Endothelial cell of umbilical vein (primary cell): ENCODE measurements at regions of chr10 and their contacts with region 1.

Region 1: GRCh38 chr10:100743626-100744135 is 1.7 kb upstream of the PAX2 start:
- DNase-seq: peak; percentile 44
- H3K4me3 ChIP-seq: no peak overlapping the region
- H3K27ac ChIP-seq: no peak overlapping the region
- H3K4me1 ChIP-seq: no peaks in the 10 kb centered on the region
- H3K27me3 ChIP-seq: peaks cover 87 to 96% of the 10 kb centered on the region in 2 experiments
- CTCF ChIP-seq: peak; percentile 66 to 82
- POLR2A ChIP-seq: no peak

Region 2: DNA sequence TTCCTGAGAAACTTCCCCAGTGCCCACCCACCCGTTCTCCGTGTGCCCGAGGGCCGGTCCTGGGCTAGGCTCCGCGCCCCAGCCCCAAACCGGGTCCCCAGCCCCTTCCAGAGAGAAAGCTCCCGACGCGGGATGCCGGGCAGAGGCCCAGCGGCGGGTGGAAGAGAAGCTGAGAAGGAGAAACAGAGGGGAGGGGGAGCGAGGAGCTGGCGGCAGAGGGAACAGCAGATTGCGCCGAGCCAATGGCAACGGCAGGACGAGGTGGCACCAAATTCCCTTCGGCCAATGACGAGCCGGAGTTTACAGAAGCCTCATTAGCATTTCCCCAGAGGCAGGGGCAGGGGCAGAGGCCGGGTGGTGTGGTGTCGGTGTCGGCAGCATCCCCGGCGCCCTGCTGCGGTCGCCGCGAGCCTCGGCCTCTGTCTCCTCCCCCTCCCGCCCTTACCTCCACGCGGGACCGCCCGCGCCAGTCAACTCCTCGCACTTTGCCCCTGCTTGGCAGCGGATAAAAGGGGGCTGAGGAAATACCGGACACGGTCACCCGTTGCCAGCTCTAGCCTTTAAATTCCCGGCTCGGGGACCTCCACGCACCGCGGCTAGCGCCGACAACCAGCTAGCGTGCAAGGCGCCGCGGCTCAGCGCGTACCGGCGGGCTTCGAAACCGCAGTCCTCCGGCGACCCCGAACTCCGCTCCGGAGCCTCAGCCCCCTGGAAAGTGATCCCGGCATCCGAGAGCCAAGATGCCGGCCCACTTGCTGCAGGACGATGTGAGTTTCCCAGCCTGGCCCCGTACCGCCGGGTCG is 396.7 kb before region 1 on chr10 and contains the start of gene SCD:
- CTCF ChIA-PET with region 1: no interaction called
- POLR2A ChIA-PET with region 1: no interaction called
- dilution Hi-C with region 1: no loop called
- intact Hi-C with region 1: no loop called
- DNase-seq: peak; percentile 92
- H3K4me3 ChIP-seq: peak within 1 kb of the TSS; percentile 85 to 87 (median 85)
- H3K27ac ChIP-seq: peak within 1 kb of the TSS; percentile 48
- H3K4me1 ChIP-seq: peaks cover 42% of the 10 kb centered on the region
- H3K27me3 ChIP-seq: no peaks in the 10 kb centered on the region
- CTCF ChIP-seq: no peak
- POLR2A ChIP-seq: peak; percentile 83
- total RNA-seq, gene SCD: 396 and 426 TPM in 2 replicates

Region 3: DNA sequence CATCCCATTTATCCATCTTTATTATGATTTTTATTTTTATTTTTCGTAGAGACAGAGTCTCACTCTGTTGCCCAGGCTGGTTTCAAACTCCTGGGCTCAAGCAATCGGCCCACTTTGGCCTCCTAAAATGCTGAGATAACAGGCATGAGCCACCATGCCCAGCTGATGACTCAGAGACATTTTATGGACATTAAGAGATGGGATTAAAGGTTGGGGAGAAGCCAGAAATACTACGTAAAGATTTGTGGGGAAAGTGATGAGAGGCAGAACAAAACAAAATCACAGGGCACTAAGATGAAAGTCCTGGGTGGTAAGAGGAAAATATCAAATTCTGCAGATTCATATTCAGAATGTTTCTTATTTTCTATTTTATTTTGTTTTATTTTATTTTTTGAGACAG is 273.3 kb before region 1 on chr10:
- CTCF ChIA-PET with region 1: no interaction called
- POLR2A ChIA-PET with region 1: no interaction called
- dilution Hi-C with region 1: no loop called
- intact Hi-C with region 1: no loop called
- DNase-seq: no peak
- H3K4me3 ChIP-seq: no peak overlapping the region
- H3K27ac ChIP-seq: no peak overlapping the region
- H3K4me1 ChIP-seq: no peaks in the 10 kb centered on the region
- H3K27me3 ChIP-seq: peaks cover 24 to 36% of the 10 kb centered on the region in 2 experiments
- CTCF ChIP-seq: no peak
- POLR2A ChIP-seq: no peak

Region 4: DNA sequence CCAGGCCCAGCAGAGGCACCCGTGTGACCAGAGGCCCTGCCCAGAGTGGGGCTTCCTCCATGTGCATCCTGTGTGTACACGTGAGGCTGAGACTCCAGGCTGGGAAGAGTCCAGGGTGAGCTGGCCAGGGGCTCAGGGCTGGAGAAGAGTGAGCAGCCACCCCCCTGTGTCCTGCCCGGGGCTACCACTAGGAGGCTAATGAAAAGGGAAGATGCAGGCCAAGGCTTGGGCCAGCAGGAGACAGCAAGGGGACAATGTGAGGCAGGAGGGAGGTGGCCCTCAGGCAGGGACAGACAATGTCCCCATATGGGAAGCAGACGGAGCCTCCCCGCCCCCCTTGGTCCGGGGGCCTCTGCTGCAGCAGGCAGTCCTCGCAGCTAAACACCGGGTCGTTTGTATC is 105.9 kb before region 1 on chr10:
- CTCF ChIA-PET with region 1: interaction called, 11 read pairs
- POLR2A ChIA-PET with region 1: no interaction called
- dilution Hi-C with region 1: no loop called
- intact Hi-C with region 1: no loop called
- DNase-seq: peak; percentile 8
- H3K4me3 ChIP-seq: no peak overlapping the region
- H3K27ac ChIP-seq: no peak overlapping the region
- H3K4me1 ChIP-seq: no peaks in the 10 kb centered on the region
- H3K27me3 ChIP-seq: peaks cover 16 to 21% of the 10 kb centered on the region in 2 experiments
- CTCF ChIP-seq: peak; percentile 29 to 74
- POLR2A ChIP-seq: no peak

Region 5: GRCh38 chr10:100670828-100671479 is 72.7 kb before region 1 on chr10:
- CTCF ChIA-PET with region 1: interaction called, 20 read pairs
- POLR2A ChIA-PET with region 1: no interaction called
- dilution Hi-C with region 1: no loop called
- intact Hi-C with region 1: loop called (anchors 1 kb)
- DNase-seq: no peak
- H3K4me3 ChIP-seq: no peak overlapping the region
- H3K27ac ChIP-seq: no peak overlapping the region
- H3K4me1 ChIP-seq: no peaks in the 10 kb centered on the region
- H3K27me3 ChIP-seq: peaks cover 32 to 42% of the 10 kb centered on the region in 2 experiments
- CTCF ChIP-seq: peak; percentile 63 to 78
- POLR2A ChIP-seq: no peak